ENCODE measurements at regions of chr6 and their contacts with region 1.

Region 1: GRCh38 chr6:71510057-71510713 is 221.6 kb downstream of the OGFRL1 start:
- DNase-seq: peak; percentile 74
- H3K4me3 ChIP-seq: no peak overlapping the region
- H3K27ac ChIP-seq: peak overlapping the region in 2 of 4 donors; percentile 8 to 45
- H3K4me1 ChIP-seq: peaks cover 0 to 17% (median 12%) of the 10 kb centered on the region in 4 donors
- H3K27me3 ChIP-seq: no peaks in the 10 kb centered on the region
- CTCF ChIP-seq: peak; percentile 46 to 70 (median 60)
- EP300 ChIP-seq: peak in 1 of 4 donors; percentile 10
- POLR2A ChIP-seq: no peak

Region 2: GRCh38 chr6:71288228-71289001 is 221.8 kb before region 1 on chr6 and contains the start of gene OGFRL1:
- intact Hi-C with region 1: loop called (anchors 5 kb)
- DNase-seq: peak; percentile 88
- H3K4me3 ChIP-seq: peak within 1 kb of the TSS; percentile 65 to 85 (median 80)
- H3K27ac ChIP-seq: peak within 1 kb of the TSS; percentile 89 to 94 (median 92)
- H3K4me1 ChIP-seq: peaks cover 0 to 28% (median 14%) of the 10 kb centered on the region in 4 donors
- H3K27me3 ChIP-seq: no peaks in the 10 kb centered on the region
- CTCF ChIP-seq: no peak
- EP300 ChIP-seq: no peak
- POLR2A ChIP-seq: peak; percentile 30 to 46
- total RNA-seq, gene OGFRL1: 23.0 to 58.5 (median 30.6) TPM

Region 3: DNA sequence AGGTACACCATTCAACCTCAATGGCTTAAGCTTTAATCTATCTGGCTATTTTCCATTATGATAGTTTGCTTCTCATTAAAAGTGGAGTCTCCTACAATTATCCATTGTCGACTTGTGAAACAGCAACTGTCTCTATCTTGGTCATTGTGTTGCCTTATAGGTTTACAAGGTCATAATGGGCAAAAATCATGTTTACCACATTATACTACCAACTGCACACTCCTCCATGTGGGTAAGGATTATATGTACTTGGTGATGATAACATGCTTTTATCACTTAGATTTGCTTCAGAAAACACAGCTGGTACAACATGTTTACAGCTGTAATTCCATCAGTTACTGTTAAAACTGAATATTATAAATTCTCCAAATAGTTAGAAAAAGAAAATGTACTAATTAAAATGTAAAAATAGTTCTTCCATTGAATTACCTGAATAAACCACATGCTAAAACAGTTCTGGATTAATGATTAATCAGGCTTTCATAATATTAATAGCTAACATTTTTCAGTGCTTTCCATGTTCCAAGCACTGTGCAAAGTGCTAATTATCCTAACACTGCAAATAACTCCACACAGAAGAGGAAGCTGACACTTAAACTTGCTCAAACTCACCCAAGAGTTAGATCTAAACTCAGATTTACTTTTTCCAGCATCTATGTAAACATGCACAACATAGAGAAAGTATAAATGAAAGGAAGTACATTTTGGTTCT is 124.9 kb before region 1 on chr6:
- intact Hi-C with region 1: loop called (anchors 1 kb)
- DNase-seq: no peak
- H3K4me3 ChIP-seq: no peak overlapping the region
- H3K27ac ChIP-seq: no peak overlapping the region
- H3K4me1 ChIP-seq: peaks cover 0 to 53% (median 10%) of the 10 kb centered on the region in 4 donors
- H3K27me3 ChIP-seq: no peaks in the 10 kb centered on the region
- CTCF ChIP-seq: no peak
- EP300 ChIP-seq: no peak
- POLR2A ChIP-seq: no peak

Region 4: GRCh38 chr6:71523548-71523947 is 13.4 kb after region 1 on chr6:
- intact Hi-C with region 1: no loop called
- DNase-seq: no peak
- H3K4me3 ChIP-seq: no peak overlapping the region
- H3K27ac ChIP-seq: no peak overlapping the region
- H3K4me1 ChIP-seq: no peaks in the 10 kb centered on the region
- H3K27me3 ChIP-seq: no peaks in the 10 kb centered on the region
- CTCF ChIP-seq: no peak
- EP300 ChIP-seq: no peak
- POLR2A ChIP-seq: no peak

Region 5: DNA sequence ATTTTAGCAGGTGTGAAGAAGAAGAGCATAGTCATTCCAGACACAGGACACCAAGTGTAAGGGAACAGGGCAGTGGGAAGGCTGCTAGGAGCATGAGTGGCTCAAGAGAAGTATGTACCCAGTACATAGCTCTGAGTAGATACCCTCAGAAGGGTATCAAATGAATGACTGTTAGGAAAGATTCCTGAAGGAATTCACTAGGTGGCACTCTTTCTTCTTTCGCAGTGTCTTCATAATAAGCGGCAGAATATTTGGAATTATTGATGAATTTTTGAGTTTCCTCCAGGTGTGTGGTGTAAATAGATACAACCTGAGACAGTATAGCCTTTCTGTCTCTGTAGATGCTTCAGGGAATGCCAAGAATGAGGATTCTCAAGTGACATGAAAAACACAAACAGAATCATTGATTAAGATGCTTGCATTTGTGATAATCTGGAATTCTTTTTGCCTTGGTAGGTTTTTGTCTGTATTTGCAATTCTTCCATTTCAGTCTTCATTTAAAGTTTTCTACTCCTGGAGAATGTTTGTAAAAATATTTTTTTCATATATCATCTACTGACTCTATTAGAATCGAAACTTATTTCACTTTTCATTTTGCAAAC is 111.8 kb after region 1 on chr6:
- intact Hi-C with region 1: no loop called
- DNase-seq: no peak
- H3K4me3 ChIP-seq: no peak overlapping the region
- H3K27ac ChIP-seq: no peak overlapping the region
- H3K4me1 ChIP-seq: no peaks in the 10 kb centered on the region
- H3K27me3 ChIP-seq: no peaks in the 10 kb centered on the region
- CTCF ChIP-seq: no peak
- EP300 ChIP-seq: no peak
- POLR2A ChIP-seq: no peak

Measured in sigmoid colon (tissue), 7 donors.